Stomach (tissue), 19 donors: ENCODE measurements at regions of chr7 and their contacts with region 1.

Region 1: DNA sequence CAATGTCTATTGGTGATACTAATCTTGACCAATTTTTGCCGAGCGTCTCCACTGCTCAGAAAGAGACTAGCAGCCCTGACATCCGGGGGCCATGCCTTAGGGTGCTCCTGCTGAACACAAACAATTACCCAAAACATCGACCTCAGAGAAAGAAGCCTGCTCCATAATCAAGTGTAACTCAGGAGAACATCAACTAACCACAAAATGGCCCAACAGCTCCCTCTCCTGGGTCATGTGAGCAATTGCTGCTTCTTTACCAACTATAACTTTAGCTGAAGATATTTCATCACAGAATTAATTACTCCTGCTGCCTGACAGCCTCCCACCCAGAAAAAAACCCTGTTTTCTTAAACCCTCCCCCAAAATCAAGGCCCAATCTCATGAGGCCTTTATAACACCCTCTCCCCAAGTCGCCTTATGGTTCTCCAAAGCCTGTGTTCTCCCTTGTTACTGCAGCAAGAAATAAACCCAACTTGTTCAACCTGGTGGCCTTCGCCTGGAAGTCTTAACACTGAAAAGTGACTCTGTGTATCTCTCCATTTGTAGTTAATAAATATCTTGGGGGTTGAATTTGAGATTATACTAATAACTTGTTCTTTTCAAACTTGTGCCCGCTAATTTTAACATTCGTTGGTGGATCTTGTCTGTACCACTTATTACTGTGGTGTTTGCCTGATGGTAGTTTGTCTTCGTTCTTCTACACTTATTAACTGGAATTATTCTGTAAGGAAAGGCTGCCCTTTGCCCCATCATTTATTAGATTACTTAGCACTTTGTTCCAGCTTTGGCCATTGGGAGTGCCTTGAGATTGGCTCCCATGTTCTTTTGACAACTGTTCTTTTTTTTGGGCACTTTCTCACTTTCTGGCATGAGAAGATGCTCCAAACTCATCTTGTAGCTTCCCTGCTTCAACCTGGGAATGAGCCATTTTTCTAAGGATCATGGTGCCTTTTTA is 21.2 kb upstream of the RAMP3 start:
- DNase-seq: peak; percentile 47 to 91
- H3K4me3 ChIP-seq: no peak overlapping the region
- H3K27ac ChIP-seq: no peak overlapping the region
- H3K4me1 ChIP-seq: no peaks in the 10 kb centered on the region
- H3K27me3 ChIP-seq: peaks cover 0 to 13% (median 0%) of the 10 kb centered on the region in 3 donors
- CTCF ChIP-seq: peak in 5 of 7 experiments; percentile 70 to 83 (median 78)
- EP300 ChIP-seq: no peak
- POLR2A ChIP-seq: no peak

Region 2: GRCh38 chr7:44973610-44974401 is 162.6 kb before region 1 on chr7:
- intact Hi-C with region 1: loop called (anchors 10 kb)
- DNase-seq: peak; percentile 43 to 60
- H3K4me3 ChIP-seq: no peak overlapping the region
- H3K27ac ChIP-seq: no peak overlapping the region
- H3K4me1 ChIP-seq: peaks cover 0 to 13% (median 4%) of the 10 kb centered on the region in 4 donors
- H3K27me3 ChIP-seq: no peaks in the 10 kb centered on the region
- CTCF ChIP-seq: peak in 5 of 7 experiments; percentile 6 to 44 (median 41)
- EP300 ChIP-seq: no peak
- POLR2A ChIP-seq: no peak